ENCODE measurements at regions of chr1 and their contacts with region 1.

Region 1: GRCh38 chr1:116485071-116485735 is 85.6 kb downstream of the CD58 start:
- DNase-seq: no peak
- H3K4me3 ChIP-seq: no peak overlapping the region
- H3K27ac ChIP-seq: no peak overlapping the region
- H3K4me1 ChIP-seq: peaks cover 0 to 42% (median 6%) of the 10 kb centered on the region in 3 donors
- H3K27me3 ChIP-seq: no peaks in the 10 kb centered on the region
- CTCF ChIP-seq: peak; percentile 72 to 95 (median 91)
- POLR2A ChIP-seq: no peak

Region 2: DNA sequence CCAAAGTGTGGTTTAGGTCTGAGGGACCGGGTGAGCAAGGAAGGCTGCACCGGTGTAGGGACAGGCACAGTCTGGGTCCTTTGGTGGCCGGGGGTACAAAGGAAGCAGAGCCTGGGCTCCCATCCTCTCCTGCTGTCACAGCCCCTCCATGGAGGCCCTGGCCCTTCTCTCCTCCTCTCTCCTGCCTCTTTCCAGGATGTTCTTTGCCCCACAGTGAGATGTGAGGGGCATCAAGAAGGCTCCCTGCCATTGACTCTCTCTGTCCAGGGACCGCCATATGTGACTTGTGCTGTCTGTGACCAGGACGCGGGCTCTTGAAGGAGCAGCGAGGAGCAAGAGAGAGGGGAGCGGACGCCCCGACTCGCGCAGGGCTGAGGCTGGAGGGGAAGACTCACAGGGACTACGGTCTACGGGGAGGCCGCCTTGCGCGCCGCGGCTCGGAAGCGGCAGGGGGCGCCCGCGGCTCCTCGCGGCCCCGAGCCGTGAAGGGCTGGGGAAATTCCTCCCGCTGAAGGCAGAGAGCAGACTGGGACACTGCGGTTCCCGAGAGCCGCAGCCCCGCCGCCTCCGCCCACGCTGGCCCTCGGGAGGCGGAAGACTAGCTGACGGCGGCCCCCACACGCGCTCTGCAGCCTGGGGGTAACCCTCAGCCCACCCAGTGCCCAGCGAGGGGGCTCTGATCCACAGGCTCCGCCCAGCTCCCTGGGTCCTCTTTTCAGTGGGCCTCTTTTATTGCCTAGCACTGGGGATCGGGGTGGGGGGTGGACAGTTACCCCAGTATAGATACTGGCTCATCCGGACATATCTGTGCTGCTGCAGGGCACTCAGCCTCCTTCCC is 333.2 kb before region 1 on chr1:
- intact Hi-C with region 1: loop called (anchors 5 kb)
- DNase-seq: no peak
- H3K4me3 ChIP-seq: peak overlapping the region; percentile 22 to 69 (median 49)
- H3K27ac ChIP-seq: peak overlapping the region; percentile 62 to 77 (median 74)
- H3K4me1 ChIP-seq: peaks cover 0 to 20% (median 7%) of the 10 kb centered on the region in 3 donors
- H3K27me3 ChIP-seq: no peaks in the 10 kb centered on the region
- CTCF ChIP-seq: peak; percentile 83 to 96 (median 92)
- POLR2A ChIP-seq: no peak

Region 3: GRCh38 chr1:116360429-116361173 is 124.6 kb before region 1 on chr1:
- intact Hi-C with region 1: loop called (anchors 10 kb)
- DNase-seq: no peak
- H3K4me3 ChIP-seq: no peak overlapping the region
- H3K27ac ChIP-seq: no peak overlapping the region
- H3K4me1 ChIP-seq: peaks cover 0 to 39% (median 11%) of the 10 kb centered on the region in 3 donors
- H3K27me3 ChIP-seq: no peaks in the 10 kb centered on the region
- CTCF ChIP-seq: peak in 5 of 6 experiments; percentile 28 to 52 (median 35)
- POLR2A ChIP-seq: no peak

Region 4: GRCh38 chr1:116570358-116571200 is 85.4 kb after region 1 on chr1 and contains the start of gene CD58:
- intact Hi-C with region 1: no loop called
- DNase-seq: peak; percentile 53
- H3K4me3 ChIP-seq: peak within 1 kb of the TSS; percentile 72 to 94 (median 85)
- H3K27ac ChIP-seq: peak within 1 kb of the TSS; percentile 96 to 99 (median 98)
- H3K4me1 ChIP-seq: peaks cover 21 to 61% (median 21%) of the 10 kb centered on the region in 3 donors
- H3K27me3 ChIP-seq: no peaks in the 10 kb centered on the region
- CTCF ChIP-seq: peak; percentile 52 to 76 (median 72)
- POLR2A ChIP-seq: peak in 2 of 4 donors; percentile 59 to 90
- total RNA-seq, gene CD58: 19.4 to 54.4 (median 32.5) TPM

Region 5: GRCh38 chr1:116664366-116664977 is 179.3 kb after region 1 on chr1:
- intact Hi-C with region 1: no loop called
- DNase-seq: no peak
- H3K4me3 ChIP-seq: peak overlapping the region in 3 of 4 donors; percentile 4 to 78 (median 76)
- H3K27ac ChIP-seq: peak overlapping the region in 1 of 4 donors; percentile 2
- H3K4me1 ChIP-seq: peaks cover 0 to 58% (median 16%) of the 10 kb centered on the region in 3 donors
- H3K27me3 ChIP-seq: peaks cover 0 to 8% (median 0%) of the 10 kb centered on the region in 4 donors
- CTCF ChIP-seq: no peak
- POLR2A ChIP-seq: no peak